ENCODE measurements at regions of chr15 and their contacts with region 1.

Region 1: DNA sequence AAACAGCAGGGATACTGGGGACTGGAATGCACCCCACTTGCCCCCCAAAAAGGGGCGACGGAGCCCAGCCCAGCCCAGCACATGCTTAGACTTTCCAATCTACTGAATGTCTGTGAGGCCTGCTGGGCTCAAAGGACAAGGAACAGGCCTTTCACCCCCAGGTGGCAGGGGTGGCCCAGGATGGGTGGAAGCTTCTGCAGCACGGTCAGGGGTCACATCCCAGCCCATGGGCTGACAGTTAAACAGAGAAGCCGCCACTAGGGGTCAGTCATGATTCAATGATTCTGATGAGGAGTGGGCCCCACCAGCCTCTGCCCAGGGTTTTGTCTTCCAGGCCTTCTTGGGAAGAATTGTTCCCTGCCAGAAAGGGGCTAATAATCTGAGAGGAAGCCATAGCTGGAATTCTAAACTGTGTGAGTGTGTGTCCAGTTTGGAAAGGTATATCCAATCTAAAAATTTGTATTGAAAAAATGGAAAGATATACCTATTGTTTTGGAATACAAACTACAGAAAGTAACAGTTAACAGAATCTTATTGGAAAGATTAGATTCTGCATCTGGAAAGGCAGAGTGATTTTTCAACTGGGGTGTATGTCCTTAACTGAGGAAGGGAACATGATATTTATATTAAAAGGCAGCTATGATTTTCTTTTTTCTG is 2.2 kb downstream of the CHRNB4 start:
- DNase-seq: peak; percentile 54
- ATAC-seq: peak; percentile 56
- H3K4me3 Mint-ChIP-seq: no peak overlapping the region
- H3K27ac Mint-ChIP-seq: no peak overlapping the region
- H3K4me1 Mint-ChIP-seq: peaks cover 5% of the 10 kb centered on the region
- H3K27me3 Mint-ChIP-seq: peaks cover 12% of the 10 kb centered on the region

Region 2: DNA sequence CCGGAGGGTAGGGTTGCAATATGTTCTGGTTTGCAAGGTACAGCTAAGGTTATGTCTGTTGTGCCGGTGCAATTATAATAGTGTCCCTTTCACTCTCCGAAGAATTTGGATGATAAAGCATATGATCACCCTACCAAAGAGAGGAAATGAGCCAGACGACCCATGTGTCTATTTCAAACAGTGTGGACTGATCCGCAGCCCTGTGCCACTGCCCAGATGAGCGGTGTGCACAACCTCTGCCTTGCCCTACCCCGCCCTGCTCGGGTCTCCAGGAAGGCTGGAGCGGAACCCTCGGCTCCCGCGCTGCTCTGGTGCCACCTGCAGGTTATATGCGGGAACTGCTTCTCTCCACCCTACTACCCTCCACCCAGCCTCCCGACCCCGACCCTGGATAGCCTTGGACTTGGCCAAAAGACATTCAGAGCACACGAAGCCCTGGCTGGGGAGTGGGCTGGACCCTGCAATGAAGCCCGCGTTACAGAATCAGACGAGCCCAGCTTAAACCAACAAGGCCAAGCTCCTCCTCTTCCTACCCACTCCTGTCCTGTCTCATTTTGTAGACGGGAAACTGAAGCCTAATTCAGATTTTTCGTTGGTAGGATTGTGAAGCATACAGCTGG is 70.6 kb after region 1 on chr15:
- CTCF ChIA-PET with region 1: interaction called, 37 read pairs
- POLR2A ChIA-PET with region 1: no interaction called
- DNase-seq: peak; percentile 75
- ATAC-seq: peak; percentile 97
- H3K4me3 Mint-ChIP-seq: peak overlapping the region; percentile 23
- H3K27ac Mint-ChIP-seq: no peak overlapping the region
- H3K4me1 Mint-ChIP-seq: peaks cover 10% of the 10 kb centered on the region
- H3K27me3 Mint-ChIP-seq: peaks cover 24% of the 10 kb centered on the region

Region 3: DNA sequence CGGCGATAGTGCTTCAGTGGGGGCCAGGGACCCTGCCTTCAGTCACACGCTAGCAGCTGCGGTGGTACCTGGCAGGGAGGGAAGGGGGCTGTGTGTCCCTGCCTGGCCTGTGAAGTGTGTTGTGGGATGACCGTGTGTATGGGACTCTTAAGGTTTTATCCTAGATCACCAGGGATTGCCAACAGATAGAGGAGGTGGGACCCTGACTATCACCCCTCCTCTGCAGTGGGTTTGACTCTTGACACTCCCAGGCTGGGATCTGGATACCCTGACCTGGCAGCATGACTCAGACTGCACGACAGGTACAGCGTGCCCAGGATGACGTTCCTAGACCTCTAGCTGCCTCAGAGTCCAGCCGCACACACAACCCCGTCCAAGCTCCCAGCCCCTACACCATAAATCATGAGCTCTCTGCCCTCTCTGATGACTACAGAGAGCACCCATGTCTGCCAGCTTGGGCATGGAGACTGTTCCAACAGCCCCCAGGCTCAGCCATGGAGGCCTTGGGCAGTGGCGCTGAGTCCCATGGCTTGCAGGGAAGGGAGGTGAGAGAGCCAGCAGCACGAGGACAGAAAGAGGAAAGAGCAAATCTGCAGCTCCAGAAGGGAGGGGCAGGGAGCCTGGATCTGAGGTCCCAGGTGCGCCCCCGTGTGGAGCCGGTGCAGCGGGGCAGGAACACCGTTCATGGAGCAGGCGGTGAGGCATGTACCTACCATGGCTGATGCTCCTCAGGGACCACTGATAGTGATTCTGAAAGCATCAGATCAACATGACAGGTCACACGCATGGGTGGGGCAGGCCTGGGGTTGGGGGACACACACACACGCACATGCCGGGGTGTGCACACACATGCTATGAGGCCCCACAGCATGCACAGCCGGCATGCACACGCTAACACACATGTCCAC is 101.5 kb after region 1 on chr15:
- CTCF ChIA-PET with region 1: interaction called, 11 read pairs
- POLR2A ChIA-PET with region 1: no interaction called
- DNase-seq: peak; percentile 82
- ATAC-seq: peak; percentile 80
- H3K4me3 Mint-ChIP-seq: no peak overlapping the region
- H3K27ac Mint-ChIP-seq: no peak overlapping the region
- H3K4me1 Mint-ChIP-seq: peaks cover 5% of the 10 kb centered on the region
- H3K27me3 Mint-ChIP-seq: no peaks in the 10 kb centered on the region

Measured in activated CD8-positive, alpha-beta T cell treated with anti-CD3 and anti-CD28 coated beads, Interleukin-2, amount 10 ng/mL, durations not matched to agents 7 days and 5 days (primary cell).